ENCODE measurements at regions of chr3 and their contacts with region 1.

Region 1: GRCh38 chr3:15108082-15108545 is 9.2 kb upstream of the RBSN start:
- DNase-seq: no peak
- ATAC-seq: peak; percentile 99
- H3K4me3 ChIP-seq: no peak overlapping the region
- H3K27ac ChIP-seq: no peak overlapping the region
- H3K4me1 ChIP-seq: no peaks in the 10 kb centered on the region
- H3K27me3 ChIP-seq: no peaks in the 10 kb centered on the region
- CTCF ChIP-seq: peak; percentile 94 to 98 (median 94)
- EP300 ChIP-seq: no peak
- POLR2A ChIP-seq: no peak
- RAD21 ChIP-seq: peak; percentile 82

Region 2: GRCh38 chr3:15217841-15218267 is 109.7 kb after region 1 on chr3:
- CTCF ChIA-PET with region 1: interaction called, 10 read pairs
- POLR2A ChIA-PET with region 1: no interaction called
- RAD21 ChIA-PET with region 1: no interaction called
- SMC1A ChIA-PET with region 1: interaction called, 5 read pairs
- in situ Hi-C with region 1: no loop called
- intact Hi-C with region 1: no loop called
- DNase-seq: no peak
- ATAC-seq: peak; percentile 56
- H3K4me3 ChIP-seq: no peak overlapping the region
- H3K27ac ChIP-seq: no peak overlapping the region
- H3K4me1 ChIP-seq: peaks cover 7% of the 10 kb centered on the region; the same call in 1 of the 2 replicates
- H3K27me3 ChIP-seq: no peaks in the 10 kb centered on the region
- CTCF ChIP-seq: no peak
- EP300 ChIP-seq: no peak
- POLR2A ChIP-seq: no peak
- RAD21 ChIP-seq: no peak

Region 3: DNA sequence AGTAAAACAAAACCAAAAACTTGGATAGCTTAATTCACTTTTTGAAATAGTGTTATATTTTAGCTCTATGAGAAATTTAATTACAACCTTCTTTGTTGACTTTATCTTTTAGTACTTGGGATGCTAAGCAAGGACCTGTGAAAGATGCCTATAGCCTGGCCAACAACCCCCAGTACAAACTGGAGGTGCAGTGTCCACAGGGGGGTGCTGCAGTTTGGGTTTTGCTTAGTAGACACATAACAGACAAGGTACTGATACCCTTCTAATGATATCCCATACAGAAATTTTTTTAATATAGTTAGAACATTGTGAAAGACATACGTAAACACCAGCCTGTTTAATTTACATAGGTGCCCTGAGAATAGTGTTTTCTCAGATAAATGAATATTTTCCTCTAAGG is 133.2 kb after region 1 on chr3:
- CTCF ChIA-PET with region 1: interaction called, 10 read pairs
- POLR2A ChIA-PET with region 1: no interaction called
- RAD21 ChIA-PET with region 1: interaction called, 3 read pairs
- SMC1A ChIA-PET with region 1: interaction called, 3 read pairs
- in situ Hi-C with region 1: no loop called
- intact Hi-C with region 1: loop called (anchors 5 kb)
- DNase-seq: no peak
- ATAC-seq: peak; percentile 88
- H3K4me3 ChIP-seq: no peak overlapping the region
- H3K27ac ChIP-seq: no peak overlapping the region
- H3K4me1 ChIP-seq: no peaks in the 10 kb centered on the region
- H3K27me3 ChIP-seq: no peaks in the 10 kb centered on the region
- CTCF ChIP-seq: peak; percentile 36 to 54 (median 47); a peak in 5 of 6 replicates
- EP300 ChIP-seq: no peak
- POLR2A ChIP-seq: no peak
- RAD21 ChIP-seq: peak; percentile 55

Measured in GM12878 (cell line).